ENCODE measurements at regions of chr10 and their contacts with region 1.

Region 1: DNA sequence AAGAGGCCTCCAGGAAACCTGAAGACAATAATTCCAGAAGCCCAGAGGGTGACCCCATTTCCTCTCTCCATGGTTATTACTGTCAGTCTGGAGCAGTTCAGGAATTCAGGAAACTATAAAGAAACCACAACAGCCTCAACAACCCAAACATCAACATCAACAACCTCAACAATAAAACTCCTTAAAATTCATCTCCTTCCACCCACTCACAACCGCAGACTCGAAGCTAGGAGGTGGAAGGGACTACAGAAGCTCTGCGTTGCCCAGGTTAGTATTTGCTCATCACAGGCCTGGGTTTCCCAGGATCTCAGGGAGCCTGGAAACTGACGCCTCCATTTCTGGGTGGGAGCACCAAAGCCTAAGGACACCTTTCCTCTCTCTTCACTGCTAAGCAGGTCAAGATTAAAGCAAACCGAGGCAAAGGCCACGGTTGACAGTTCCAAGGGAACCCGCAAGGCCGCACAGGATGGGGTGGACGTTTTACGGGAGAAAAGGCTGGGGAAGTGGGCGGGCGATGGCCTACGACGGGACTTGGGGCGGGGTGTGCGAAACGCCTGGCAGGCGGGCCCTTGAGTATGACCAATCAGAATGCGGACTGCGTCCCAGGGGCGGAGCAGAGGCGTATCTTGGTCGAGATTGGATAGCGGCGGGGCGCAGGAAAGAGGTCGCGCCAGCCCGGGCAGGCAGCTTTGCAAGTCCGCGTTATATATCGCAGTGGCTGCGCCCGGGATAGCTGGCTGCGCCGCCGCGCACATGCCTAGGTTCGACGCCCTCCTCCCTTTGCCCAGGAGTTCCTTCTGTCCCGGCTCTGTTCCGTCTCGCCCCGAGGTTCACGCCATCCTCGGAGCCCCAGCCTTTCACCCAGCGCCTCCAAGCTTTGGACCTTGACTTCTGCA is at the start of gene ELOVL3:
- DNase-seq: peak; percentile 73
- H3K4me3 ChIP-seq: peak within 1 kb of the TSS; percentile 14; the same call in 1 of the 2 replicates
- H3K27me3 ChIP-seq: peaks cover 25% of the 10 kb centered on the region
- CTCF ChIP-seq: no peak
- polyA plus RNA-seq, gene ELOVL3: 0.34 and 0.43 TPM in 2 replicates

Region 2: GRCh38 chr10:102167861-102168260 is 58.0 kb before region 1 on chr10:
- CTCF ChIA-PET with region 1: interaction called, 19 read pairs
- POLR2A ChIA-PET with region 1: no interaction called
- DNase-seq: no peak
- H3K4me3 ChIP-seq: no peak overlapping the region
- H3K27me3 ChIP-seq: no peaks in the 10 kb centered on the region
- CTCF ChIP-seq: no peak

Region 3: GRCh38 chr10:102254426-102254825 is 28.5 kb after region 1 on chr10:
- CTCF ChIA-PET with region 1: interaction called, 15 read pairs
- POLR2A ChIA-PET with region 1: no interaction called
- DNase-seq: no peak
- H3K4me3 ChIP-seq: no peak overlapping the region
- H3K27me3 ChIP-seq: no peaks in the 10 kb centered on the region
- CTCF ChIP-seq: no peak

Region 4: DNA sequence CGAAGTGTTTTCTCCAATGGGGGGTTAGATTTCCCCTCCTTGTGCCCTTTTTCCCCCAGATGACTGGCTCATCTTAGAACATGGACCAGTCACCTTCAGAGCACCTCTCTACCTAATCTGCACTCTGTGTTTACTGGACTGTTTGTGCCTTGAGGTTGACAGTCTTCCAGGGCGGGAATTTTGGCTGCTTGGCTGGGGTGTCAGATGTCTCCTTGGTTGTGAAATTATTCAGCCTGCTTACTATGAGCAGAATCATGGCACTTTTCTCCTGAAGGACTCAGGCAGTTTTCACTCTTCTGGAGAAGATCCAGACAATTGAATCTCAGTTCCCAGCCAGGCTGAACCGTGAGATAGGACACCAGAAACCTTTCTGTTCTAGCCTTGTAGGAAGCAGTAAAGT is 109.3 kb after region 1 on chr10:
- CTCF ChIA-PET with region 1: interaction called, 13 read pairs
- POLR2A ChIA-PET with region 1: no interaction called
- DNase-seq: no peak
- H3K4me3 ChIP-seq: no peak overlapping the region
- H3K27me3 ChIP-seq: no peaks in the 10 kb centered on the region
- CTCF ChIP-seq: no peak

Region 5: GRCh38 chr10:102368072-102368471 is 142.2 kb after region 1 on chr10:
- CTCF ChIA-PET with region 1: interaction called, 16 read pairs
- POLR2A ChIA-PET with region 1: no interaction called
- DNase-seq: no peak
- H3K4me3 ChIP-seq: no peak overlapping the region
- H3K27me3 ChIP-seq: no peaks in the 10 kb centered on the region
- CTCF ChIP-seq: no peak

Region 6: GRCh38 chr10:102394079-102394800 is 168.3 kb after region 1 on chr10:
- CTCF ChIA-PET with region 1: interaction called, 222 read pairs
- POLR2A ChIA-PET with region 1: interaction called, 3 read pairs
- DNase-seq: peak; percentile 51
- H3K4me3 ChIP-seq: peak overlapping the region; percentile 79
- H3K27me3 ChIP-seq: no peaks in the 10 kb centered on the region
- CTCF ChIP-seq: no peak; the same call in 1 of the 2 replicates

Region 7: GRCh38 chr10:102420810-102421644 is 195.1 kb after region 1 on chr10 and contains the start of gene FBXL15:
- CTCF ChIA-PET with region 1: interaction called, 60 read pairs
- POLR2A ChIA-PET with region 1: interaction called, 3 read pairs
- DNase-seq: peak; percentile 68
- H3K4me3 ChIP-seq: peak within 1 kb of the TSS; percentile 82
- H3K27me3 ChIP-seq: peaks cover 4% of the 10 kb centered on the region
- CTCF ChIP-seq: no peak
- polyA plus RNA-seq, gene FBXL15: 3.5 and 7.5 TPM in 2 replicates

Measured in BJ (cell line).